ENCODE measurements at regions of chrX and their contacts with region 1.

Region 1: GRCh38 chrX:48539345-48540027 is at the start of gene TBC1D25:
- DNase-seq: peak; percentile 98
- ATAC-seq: peak; percentile 83
- H3K4me3 Mint-ChIP-seq: peak within 1 kb of the TSS; percentile 87
- H3K27ac Mint-ChIP-seq: peak within 1 kb of the TSS; percentile 99
- H3K4me1 Mint-ChIP-seq: peaks cover 29% of the 10 kb centered on the region
- H3K27me3 Mint-ChIP-seq: no peaks in the 10 kb centered on the region
- total RNA-seq, gene TBC1D25: 16.2 to 16.7 TPM

Region 2: DNA sequence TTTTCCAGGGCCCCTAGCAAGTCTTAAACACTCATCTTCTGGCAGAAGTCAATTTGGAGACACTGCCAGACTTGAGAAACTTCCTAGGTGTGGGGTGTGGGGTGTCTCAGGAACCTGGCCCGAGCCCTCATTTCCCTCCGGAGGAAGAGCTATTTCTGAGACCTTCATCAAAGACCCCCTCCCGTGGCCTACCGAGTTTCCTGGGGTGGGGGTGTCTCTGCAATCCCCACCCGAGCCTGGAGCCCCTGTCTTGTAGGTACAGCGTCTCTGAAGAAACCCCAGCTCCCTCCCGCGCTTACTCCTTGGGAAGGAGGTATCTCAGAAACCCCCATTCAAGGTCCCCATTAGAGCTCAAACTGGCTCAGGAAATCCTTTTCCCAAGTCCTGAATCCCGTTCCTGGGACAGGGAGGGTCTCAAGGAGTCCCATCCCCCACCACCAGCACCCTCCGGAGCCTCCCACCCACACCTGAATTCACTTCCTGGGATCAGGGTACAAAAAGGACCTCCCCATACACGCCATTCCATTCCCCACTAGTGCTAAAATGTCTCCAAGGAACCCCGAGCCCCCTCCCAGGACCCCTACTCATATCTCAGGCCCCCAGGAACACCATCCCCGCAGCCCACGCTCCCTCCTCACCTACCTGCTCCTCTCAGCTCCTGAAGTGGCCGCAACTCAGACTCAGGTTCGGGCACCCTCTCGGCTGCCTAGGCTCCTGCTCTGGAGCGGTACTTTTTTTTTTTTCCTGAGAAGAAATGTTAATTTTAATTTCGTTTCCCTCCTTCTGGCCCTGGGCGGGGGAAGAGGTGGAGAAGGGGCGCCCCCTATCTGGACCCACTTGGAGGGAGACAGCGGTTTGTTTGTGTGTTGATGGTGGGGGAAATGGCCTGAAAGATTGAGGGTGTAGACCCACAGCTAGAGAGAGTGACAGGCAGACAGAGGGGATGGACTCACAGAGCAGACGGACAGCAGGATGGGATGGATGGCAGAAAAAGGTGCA is 70.5 kb before region 1 on chrX:
- CTCF ChIA-PET with region 1: interaction called, 21 read pairs
- POLR2A ChIA-PET with region 1: interaction called, 7 read pairs
- DNase-seq: peak; percentile 64
- ATAC-seq: peak; percentile 70
- H3K4me3 Mint-ChIP-seq: peak overlapping the region; percentile 97
- H3K27ac Mint-ChIP-seq: peak overlapping the region; percentile 90
- H3K4me1 Mint-ChIP-seq: peaks cover 59% of the 10 kb centered on the region
- H3K27me3 Mint-ChIP-seq: no peaks in the 10 kb centered on the region

Region 3: DNA sequence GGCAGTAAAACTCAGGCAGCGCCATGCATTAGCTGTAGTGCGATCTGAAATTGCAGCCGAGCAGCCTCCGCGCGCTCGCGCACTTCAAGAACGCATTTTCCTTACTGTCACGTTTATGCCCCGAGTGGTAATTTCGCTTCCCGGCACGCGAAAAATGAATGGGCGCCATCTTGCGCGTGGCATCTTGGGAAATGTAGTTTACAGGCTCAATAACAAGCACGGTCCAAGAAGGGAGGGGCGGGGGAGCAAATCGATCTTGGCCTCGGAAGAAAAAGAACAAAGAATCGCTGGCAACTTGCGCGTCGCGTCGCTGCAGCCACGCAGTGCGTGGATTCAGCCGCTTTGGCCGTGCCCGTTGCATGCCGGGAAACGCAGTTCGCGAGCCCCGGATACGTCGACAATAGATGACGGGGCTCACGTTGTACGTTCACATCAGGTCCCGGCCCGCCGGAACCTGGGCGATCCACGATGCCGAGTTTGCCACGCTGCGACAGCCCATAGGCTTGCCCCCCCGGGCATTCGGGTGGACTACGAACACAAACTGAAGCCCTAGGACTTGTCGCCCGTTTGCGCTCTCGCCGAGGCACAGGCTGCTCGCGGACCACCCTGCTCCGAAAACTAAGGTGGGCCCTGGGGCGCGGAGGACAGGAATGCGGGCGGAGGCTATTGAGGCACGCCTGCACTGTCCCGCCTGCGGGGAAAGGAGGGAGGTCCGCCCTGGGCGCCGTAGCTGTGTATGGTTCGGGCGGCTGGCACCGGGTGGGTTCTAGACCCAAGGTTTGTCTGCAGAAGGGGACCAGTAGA is 63.5 kb before region 1 on chrX and contains the start of gene FTSJ1:
- CTCF ChIA-PET with region 1: interaction called, 21 read pairs
- POLR2A ChIA-PET with region 1: interaction called, 7 read pairs
- DNase-seq: peak; percentile 93
- ATAC-seq: peak; percentile 94
- H3K4me3 Mint-ChIP-seq: peak within 1 kb of the TSS; percentile 94
- H3K27ac Mint-ChIP-seq: peak within 1 kb of the TSS; percentile 92
- H3K4me1 Mint-ChIP-seq: peaks cover 46% of the 10 kb centered on the region
- H3K27me3 Mint-ChIP-seq: no peaks in the 10 kb centered on the region
- total RNA-seq, gene FTSJ1: 64.9 to 72.0 TPM

Region 4: DNA sequence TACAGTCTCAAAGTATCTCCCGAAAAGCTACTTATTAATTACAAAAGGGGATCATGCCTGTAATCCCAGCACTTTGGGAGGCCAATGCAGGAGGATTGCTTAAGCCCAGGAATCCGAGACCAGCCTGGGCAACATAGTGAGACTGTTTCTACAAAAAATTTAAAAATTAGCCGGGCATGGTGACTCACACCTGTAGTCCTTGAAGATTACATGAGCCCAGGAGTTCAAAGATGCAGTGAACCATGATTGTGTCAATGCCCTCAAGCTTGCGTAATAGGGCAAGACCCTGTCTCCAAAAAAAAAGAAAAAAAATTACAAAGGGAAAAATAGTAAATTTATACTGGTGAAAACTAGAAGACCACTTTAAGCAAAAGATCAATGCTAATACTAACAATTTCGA is 34.0 kb before region 1 on chrX:
- CTCF ChIA-PET with region 1: no interaction called
- POLR2A ChIA-PET with region 1: no interaction called
- DNase-seq: no peak
- ATAC-seq: no peak
- H3K4me3 Mint-ChIP-seq: no peak overlapping the region
- H3K27ac Mint-ChIP-seq: no peak overlapping the region
- H3K4me1 Mint-ChIP-seq: peaks cover 13% of the 10 kb centered on the region
- H3K27me3 Mint-ChIP-seq: no peaks in the 10 kb centered on the region

Region 5: DNA sequence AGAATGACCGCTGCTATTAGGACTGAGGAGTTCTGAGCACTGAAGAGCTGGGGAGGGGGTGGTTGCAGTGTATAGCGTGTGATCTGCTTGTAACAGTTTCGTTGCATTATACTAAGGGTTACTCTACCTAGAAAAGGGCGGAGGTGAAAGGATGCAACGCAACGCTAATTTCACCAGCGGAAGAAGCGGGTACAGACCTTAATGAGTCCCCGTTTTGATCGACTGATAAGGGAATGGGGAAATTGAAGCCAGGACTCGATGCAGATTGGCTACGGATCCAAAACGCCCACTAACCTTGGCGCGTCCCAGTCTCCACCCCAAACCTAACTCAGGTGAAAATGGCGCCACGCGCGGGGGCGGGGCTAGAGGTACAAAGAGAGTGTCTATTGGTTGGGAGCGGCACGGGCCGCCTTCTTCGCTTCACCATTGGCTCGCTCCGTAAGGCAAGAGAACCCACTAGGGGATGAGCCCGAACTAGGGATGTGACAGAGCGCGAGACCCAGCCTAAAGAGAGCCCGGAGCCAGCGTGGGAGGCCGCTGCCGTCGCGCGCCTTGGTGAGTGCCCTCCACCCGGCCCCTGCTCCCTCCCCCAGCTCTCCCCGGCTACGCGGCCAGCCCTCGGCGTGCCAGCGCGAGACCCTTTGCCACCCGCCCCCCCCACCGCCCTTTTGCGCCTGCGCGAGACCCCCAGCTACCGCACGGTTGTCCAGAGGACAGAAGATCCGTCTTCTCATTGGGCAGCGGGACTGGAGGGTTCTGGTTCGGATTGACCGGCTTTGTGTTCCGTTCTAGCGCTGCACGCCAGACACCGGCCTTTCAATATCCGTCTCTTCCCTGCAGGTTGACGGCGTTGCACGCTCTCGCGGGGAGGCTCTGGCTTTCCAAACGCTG is 17.9 kb before region 1 on chrX and contains the start of gene EBP:
- CTCF ChIA-PET with region 1: interaction called, 11 read pairs
- POLR2A ChIA-PET with region 1: interaction called, 20 read pairs
- DNase-seq: peak; percentile 96
- ATAC-seq: peak; percentile 97
- H3K4me3 Mint-ChIP-seq: peak within 1 kb of the TSS; percentile 89
- H3K27ac Mint-ChIP-seq: peak within 1 kb of the TSS; percentile 99
- H3K4me1 Mint-ChIP-seq: peaks cover 43% of the 10 kb centered on the region
- H3K27me3 Mint-ChIP-seq: no peaks in the 10 kb centered on the region
- total RNA-seq, gene EBP: 338 to 344 TPM

Region 6: GRCh38 chrX:48574270-48575266 is 35.1 kb after region 1 on chrX and contains the start of gene RBM3:
- CTCF ChIA-PET with region 1: interaction called, 8 read pairs
- POLR2A ChIA-PET with region 1: interaction called, 21 read pairs
- DNase-seq: peak; percentile 96
- ATAC-seq: peak; percentile 95
- H3K4me3 Mint-ChIP-seq: peak within 1 kb of the TSS; percentile 97
- H3K27ac Mint-ChIP-seq: peak within 1 kb of the TSS; percentile 98
- H3K4me1 Mint-ChIP-seq: peaks cover 35% of the 10 kb centered on the region
- H3K27me3 Mint-ChIP-seq: no peaks in the 10 kb centered on the region
- total RNA-seq, gene RBM3: 266 to 278 TPM

Region 7: DNA sequence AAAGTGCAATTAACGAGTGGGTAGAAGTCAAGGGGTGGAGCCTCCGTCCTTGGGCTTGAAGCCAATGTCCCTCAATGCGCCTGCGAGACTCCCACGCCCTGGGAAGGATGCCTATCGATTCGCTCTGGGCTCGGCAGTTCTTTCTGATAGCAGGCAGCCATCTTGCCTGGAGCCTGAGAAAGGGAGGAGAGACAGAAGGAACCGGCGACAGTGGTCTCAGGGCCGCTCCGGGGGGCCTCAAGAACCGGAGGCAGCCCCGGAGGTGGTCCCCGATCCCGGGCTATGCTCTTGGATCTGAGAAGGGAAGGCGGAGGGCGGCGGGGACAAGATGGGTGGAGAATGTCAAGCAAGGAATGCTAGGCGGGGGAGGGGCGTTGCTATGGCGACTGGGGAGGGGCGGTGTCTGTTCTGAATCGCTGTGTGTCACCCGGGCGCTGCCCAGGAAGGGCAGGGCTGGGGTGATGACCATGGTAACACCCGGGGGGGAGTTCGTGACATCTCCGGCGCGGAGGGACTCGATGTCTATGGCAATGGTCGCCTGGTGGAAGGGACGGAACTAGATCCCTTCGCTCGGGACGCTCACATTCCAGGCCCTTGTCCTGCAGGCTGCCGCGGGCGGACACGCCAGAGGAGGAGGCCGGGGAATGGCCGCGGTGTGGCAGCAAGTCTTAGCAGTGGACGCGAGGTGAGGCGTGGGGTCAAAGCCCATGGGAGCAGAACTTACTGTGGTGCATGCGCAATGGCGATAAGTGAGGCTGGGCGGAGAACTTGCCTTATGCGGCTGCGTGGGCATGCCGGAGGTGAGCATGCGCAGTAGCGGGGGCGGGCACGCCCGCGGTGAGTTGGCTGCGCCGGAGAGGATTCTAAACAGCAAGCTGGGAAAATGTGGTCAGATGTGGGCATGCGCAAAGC is 58.1 kb after region 1 on chrX and contains the start of gene WDR13:
- CTCF ChIA-PET with region 1: no interaction called
- POLR2A ChIA-PET with region 1: no interaction called
- DNase-seq: peak; percentile 93
- ATAC-seq: peak; percentile 86
- H3K4me3 Mint-ChIP-seq: peak within 1 kb of the TSS; percentile 93
- H3K27ac Mint-ChIP-seq: peak within 1 kb of the TSS; percentile 99
- H3K4me1 Mint-ChIP-seq: peaks cover 9% of the 10 kb centered on the region
- H3K27me3 Mint-ChIP-seq: no peaks in the 10 kb centered on the region
- total RNA-seq, gene WDR13: 37.6 to 43.7 TPM

Region 8: GRCh38 chrX:48665991-48666390 is 126.5 kb after region 1 on chrX:
- CTCF ChIA-PET with region 1: no interaction called
- POLR2A ChIA-PET with region 1: no interaction called
- DNase-seq: no peak
- ATAC-seq: no peak
- H3K4me3 Mint-ChIP-seq: no peak overlapping the region
- H3K27ac Mint-ChIP-seq: no peak overlapping the region
- H3K4me1 Mint-ChIP-seq: peaks cover 3% of the 10 kb centered on the region
- H3K27me3 Mint-ChIP-seq: no peaks in the 10 kb centered on the region

Measured in activated CD8-positive, alpha-beta T cell treated with anti-CD3 and anti-CD28 coated beads, Interleukin-2, amount 10 ng/mL, durations not matched to agents 7 days and 5 days (primary cell).